Gastrocnemius medialis (tissue), 4 donors: ENCODE measurements at regions of chr20 and their contacts with region 1.

Region 1: DNA sequence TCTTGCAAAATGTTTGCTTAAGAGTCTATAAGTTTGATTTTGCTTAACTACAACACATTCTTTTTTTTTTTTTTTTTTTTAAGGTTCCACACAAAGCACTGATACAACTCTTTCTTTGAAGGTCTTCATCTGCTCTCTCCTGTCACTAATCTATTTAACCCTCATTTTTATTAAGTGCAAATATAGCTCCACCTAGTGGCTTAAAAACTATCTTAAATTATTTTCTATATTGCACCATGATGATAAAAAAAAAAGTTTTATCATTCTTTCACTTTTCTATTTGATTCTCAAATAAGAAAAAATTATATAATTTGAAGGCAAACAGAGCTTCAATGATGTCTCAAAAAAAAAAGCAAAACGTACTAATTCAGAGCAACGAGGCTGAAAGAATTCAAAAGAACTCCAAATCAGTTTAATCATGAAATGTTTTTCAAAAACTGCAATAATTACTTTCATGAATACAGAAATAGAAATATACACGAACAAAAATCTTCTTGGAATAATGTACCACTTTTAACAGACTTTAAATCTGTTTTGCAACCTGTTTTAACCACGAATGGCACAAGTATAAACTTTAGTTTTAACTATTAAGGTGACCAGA is 12.8 kb downstream of the ESF1 start:
- DNase-seq: no peak
- ATAC-seq: no peak
- H3K4me3 ChIP-seq: no peak overlapping the region
- H3K27ac ChIP-seq: no peak overlapping the region
- H3K4me1 ChIP-seq: peaks cover 0 to 1% of the 10 kb centered on the region in 2 donors
- H3K27me3 ChIP-seq: no peaks in the 10 kb centered on the region
- CTCF ChIP-seq: peak in 4 of 5 experiments; percentile 13 to 56 (median 31)
- POLR2A ChIP-seq: no peak

Region 2: DNA sequence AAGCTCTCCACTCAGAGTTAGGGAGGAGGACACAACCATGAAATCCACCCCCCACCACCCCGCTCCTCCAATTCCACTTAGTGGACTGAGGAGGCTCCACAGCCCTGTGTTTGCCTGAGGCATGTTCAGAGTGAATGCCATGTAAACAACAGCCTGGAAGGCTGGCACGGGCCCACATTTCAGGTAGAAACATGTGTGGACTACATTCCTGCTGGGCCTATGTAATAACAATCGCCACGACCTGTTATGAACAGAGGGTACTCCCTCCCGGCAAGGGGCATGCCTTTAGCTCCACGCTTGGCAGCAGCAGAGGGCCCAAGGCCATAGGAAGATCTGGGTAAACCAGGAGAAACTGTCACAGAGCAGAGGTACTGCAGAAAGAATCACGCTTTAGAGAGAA is 485.3 kb before region 1 on chr20:
- in situ Hi-C with region 1: loop called in 1 of 4 experiments (anchors 25 kb)
- intact Hi-C with region 1: no loop called
- DNase-seq: no peak
- ATAC-seq: no peak
- H3K4me3 ChIP-seq: no peak overlapping the region
- H3K27ac ChIP-seq: no peak overlapping the region
- H3K4me1 ChIP-seq: no peaks in the 10 kb centered on the region
- H3K27me3 ChIP-seq: no peaks in the 10 kb centered on the region
- CTCF ChIP-seq: no peak
- POLR2A ChIP-seq: no peak

Region 3: GRCh38 chr20:13492001-13492481 is 279.9 kb before region 1 on chr20:
- in situ Hi-C with region 1: loop called in 1 of 4 experiments (anchors 25 kb)
- intact Hi-C with region 1: no loop called
- DNase-seq: peak in 1 of 2 donors; percentile 53
- ATAC-seq: peak; percentile 80 to 85
- H3K4me3 ChIP-seq: no peak overlapping the region
- H3K27ac ChIP-seq: peak overlapping the region in 1 of 4 donors; percentile 30
- H3K4me1 ChIP-seq: peaks cover 10 to 24% of the 10 kb centered on the region in 2 donors
- H3K27me3 ChIP-seq: no peaks in the 10 kb centered on the region
- CTCF ChIP-seq: no peak
- POLR2A ChIP-seq: no peak